ENCODE measurements at regions of chr16 and their contacts with region 1.

Region 1: GRCh38 chr16:19086322-19087199 is 19.1 kb downstream of the COQ7 start:
- DNase-seq: peak; percentile 75
- H3K4me3 Mint-ChIP-seq: peak overlapping the region; percentile 54
- H3K27ac Mint-ChIP-seq: no peak overlapping the region
- H3K4me1 Mint-ChIP-seq: no peaks in the 10 kb centered on the region
- H3K27me3 Mint-ChIP-seq: peaks cover 7% of the 10 kb centered on the region

Region 2: DNA sequence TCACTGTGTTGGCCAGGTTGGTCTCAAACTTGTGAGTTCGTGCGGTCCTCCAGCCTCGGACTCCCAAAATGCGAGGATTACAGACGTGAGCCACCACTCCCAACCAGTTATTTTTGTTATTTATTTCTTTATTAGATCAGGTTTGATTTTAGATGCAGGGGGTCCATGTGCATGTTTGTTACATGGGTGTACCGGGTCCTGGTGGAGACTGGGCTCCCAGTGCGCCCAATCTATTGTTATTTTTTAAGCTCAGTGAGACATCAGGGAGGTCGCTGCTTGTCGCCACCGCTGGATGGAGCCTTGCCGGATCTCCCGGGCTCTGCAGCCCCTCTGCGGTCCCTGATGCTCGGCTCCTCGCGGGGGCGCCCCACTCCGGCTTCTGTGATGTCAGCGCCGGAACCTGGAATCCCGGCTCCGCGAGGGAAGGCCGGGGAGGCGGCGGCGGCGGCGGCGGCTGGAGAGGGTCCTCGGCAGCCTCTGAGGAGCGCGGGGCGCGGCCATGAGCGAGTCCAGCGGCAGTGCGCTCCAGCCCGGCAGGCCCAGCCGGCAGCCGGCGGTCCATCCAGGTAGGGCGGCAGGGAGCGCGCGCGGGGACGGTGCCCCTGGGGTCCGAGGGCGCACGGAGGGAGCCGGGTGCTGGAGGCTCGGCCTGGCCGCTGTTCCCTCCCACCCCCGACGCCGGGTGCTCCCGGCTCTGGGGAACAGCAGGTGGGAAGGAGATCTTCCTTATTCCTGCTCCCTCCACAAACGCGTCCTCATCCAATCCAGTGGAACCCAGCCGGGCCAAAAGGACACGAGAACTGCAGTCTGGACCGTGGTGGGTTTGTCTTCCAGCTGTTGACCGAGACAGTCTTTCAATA is 102.8 kb before region 1 on chr16 and contains the start of gene TMC7:
- intact Hi-C with region 1: no loop called
- DNase-seq: no peak
- H3K4me3 Mint-ChIP-seq: no peak within 1 kb of the TSS
- H3K27ac Mint-ChIP-seq: no peak within 1 kb of the TSS
- H3K4me1 Mint-ChIP-seq: no peaks in the 10 kb centered on the region
- H3K27me3 Mint-ChIP-seq: peaks cover 47% of the 10 kb centered on the region
- total RNA-seq, gene TMC7: 0.05 TPM in 1 of 2 replicates, not detected in the other

Region 3: GRCh38 chr16:19167710-19168370 is 81.3 kb after region 1 on chr16 and contains the start of gene SYT17:
- intact Hi-C with region 1: loop called (anchors 1 kb)
- DNase-seq: peak; percentile 14
- H3K4me3 Mint-ChIP-seq: no peak within 1 kb of the TSS
- H3K27ac Mint-ChIP-seq: no peak within 1 kb of the TSS
- H3K4me1 Mint-ChIP-seq: no peaks in the 10 kb centered on the region
- H3K27me3 Mint-ChIP-seq: peaks cover 39% of the 10 kb centered on the region
- total RNA-seq, gene SYT17: 0.37 and 0.54 TPM in 2 replicates

Region 4: DNA sequence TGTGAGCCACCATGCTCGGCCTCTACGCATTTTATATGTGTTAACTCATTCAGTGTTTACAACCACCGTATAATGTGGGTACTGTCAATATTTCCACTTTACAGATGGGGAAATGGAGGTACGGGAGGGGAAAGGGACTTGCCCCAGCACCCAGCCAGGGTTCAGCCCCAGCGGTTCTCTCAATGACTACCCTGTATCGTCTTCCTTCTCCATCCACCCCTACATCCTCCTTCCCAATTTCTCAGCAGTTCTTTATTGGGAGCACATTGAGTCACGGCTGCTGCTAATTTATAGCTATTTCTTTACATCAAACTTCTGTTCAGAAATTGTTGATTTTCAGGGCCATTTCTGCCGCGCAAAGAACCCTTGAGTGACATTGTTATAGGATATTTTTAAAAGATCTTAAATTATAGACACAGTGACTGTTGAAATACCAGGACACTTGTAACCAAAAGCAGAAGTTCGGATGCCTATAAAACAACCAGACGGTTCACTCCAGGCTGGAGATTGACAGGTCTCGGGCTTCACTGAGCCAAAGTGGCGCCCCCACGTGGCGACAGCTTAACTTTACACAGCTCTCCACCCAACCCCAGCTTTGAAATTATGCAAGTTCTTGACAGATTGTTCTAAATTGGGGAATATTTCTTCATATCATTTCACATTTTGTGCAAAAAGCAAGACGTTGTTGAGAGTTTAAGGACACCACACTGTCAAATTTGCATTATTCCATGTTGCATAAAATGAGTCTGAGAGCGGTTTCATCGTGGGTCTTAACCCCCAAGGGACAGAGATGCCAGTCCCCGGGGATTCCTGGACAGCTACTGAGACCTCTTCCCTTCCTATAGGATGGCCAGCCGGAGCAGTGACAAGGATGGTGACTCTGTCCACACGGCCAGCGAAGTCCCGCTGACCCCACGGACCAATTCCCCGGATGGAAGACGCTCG is 93.3 kb after region 1 on chr16:
- intact Hi-C with region 1: loop called (anchors 1 kb)
- DNase-seq: peak; percentile 24
- H3K4me3 Mint-ChIP-seq: no peak overlapping the region
- H3K27ac Mint-ChIP-seq: peak overlapping the region; percentile 52
- H3K4me1 Mint-ChIP-seq: no peaks in the 10 kb centered on the region
- H3K27me3 Mint-ChIP-seq: peaks cover 3% of the 10 kb centered on the region

Measured in activated T-helper 1 cell treated with anti-CD3 and anti-CD28 coated beads, Interleukin-12 subunit alpha, Interleukin-12 subunit beta, Interleukin-2, Interleukin-4 antibody, amounts not matched to agents 30 ng/mL and 10 ng/mL and 1 ng/mL, durations not matched to agents 14 hours and 24 hours and 36 hours (primary cell).